ENCODE measurements at regions of chr22 and their contacts with region 1.

Region 1: DNA sequence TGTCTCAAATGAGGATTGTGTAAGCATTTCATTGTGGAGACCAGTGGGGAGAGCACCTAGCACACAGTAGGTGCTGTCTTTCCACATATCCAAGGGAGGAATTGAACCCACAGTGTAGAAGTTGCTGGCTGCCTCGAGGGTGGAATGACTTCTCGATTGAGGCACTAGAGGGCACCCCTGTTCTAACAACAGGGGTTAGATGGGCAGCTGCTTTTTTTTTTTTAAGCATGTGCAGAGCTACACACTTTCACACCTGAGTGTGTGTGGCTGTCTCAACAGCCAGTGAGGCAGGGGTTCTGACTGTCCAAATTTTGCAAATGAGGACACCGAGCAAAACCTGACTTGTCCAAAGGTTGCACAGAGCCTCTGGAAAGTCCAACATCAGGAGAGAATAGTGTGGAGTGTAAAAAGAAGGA is 118.2 kb upstream of the CRYBB3 start:
- DNase-seq: peak; percentile 63
- H3K4me3 Mint-ChIP-seq: no peak overlapping the region
- H3K27ac Mint-ChIP-seq: no peak overlapping the region
- H3K4me1 Mint-ChIP-seq: peaks cover 55% of the 10 kb centered on the region
- H3K27me3 Mint-ChIP-seq: no peaks in the 10 kb centered on the region

Region 2: DNA sequence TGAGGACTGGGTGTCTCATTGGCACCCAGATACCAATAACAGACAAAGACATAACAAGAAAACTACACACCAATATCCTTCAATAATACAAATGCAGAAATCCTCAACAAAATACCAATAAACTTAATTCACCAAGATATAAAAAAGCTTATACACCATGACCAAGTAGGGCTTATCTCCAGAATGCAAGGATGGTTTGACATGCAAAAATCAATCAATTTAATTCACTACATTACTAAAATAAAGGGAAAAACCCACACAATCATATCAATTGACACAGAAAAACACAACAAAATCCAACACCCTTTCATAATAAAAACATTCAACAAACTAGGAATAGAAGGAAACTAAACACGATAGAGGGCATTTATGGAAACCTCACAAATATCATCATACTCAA is 175.5 kb before region 1 on chr22:
- CTCF ChIA-PET with region 1: no interaction called
- POLR2A ChIA-PET with region 1: no interaction called
- DNase-seq: no peak
- H3K4me3 Mint-ChIP-seq: no peak overlapping the region
- H3K27ac Mint-ChIP-seq: no peak overlapping the region
- H3K4me1 Mint-ChIP-seq: no peaks in the 10 kb centered on the region
- H3K27me3 Mint-ChIP-seq: no peaks in the 10 kb centered on the region

Region 3: DNA sequence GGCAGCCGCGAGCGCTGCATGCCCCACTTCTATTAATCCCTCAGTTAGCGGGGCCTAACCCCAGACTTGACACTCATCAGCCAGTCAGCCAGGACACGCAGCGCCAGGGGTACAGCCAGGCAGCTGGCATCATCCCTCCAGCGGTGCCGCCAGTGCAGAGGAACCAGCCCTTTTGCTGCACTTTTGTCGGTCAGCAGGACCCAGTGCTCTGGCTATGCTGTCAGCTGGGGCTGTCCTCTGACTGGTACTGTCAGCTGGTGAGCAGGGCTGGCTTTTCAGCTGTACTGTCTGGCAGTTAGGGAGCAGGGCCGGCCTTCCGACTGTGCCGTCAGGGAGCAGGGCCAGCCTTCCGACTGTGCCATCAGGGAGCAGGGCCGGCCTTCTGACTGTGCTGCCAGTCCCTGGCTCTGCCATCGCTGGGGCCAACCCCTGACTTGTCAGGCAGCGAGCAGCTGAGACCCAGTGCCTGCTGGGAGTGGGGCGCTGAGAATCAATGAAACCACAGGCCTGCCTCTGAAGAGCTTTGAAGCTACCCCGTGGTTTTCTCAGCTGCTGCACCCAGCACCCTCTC is 13.5 kb before region 1 on chr22:
- CTCF ChIA-PET with region 1: interaction called, 11 read pairs
- POLR2A ChIA-PET with region 1: interaction called, 23 read pairs
- DNase-seq: peak; percentile 91
- H3K4me3 Mint-ChIP-seq: peak overlapping the region; percentile 79
- H3K27ac Mint-ChIP-seq: peak overlapping the region; percentile 99
- H3K4me1 Mint-ChIP-seq: peaks cover 73% of the 10 kb centered on the region
- H3K27me3 Mint-ChIP-seq: no peaks in the 10 kb centered on the region

Region 4: DNA sequence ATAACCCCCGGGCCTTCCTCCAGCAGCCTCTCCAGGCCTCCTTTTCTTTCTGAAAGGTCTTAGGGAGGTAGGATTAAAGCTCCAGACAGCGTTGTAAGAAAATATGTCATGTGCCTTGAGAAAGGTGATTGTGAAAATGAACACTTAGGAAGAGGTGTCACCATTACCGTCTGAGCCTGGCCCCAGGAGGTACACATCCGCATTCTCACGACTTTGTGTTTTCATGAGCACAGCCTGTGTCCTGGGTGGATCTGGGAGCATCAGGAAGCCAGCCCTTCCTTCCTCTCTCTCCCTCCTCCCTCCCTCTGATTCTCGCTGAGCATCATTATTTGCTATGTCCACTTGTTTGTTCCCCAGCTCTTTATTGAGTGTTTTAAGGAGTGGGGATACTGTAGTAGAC is 13.2 kb after region 1 on chr22:
- CTCF ChIA-PET with region 1: no interaction called
- POLR2A ChIA-PET with region 1: no interaction called
- DNase-seq: no peak
- H3K4me3 Mint-ChIP-seq: no peak overlapping the region
- H3K27ac Mint-ChIP-seq: no peak overlapping the region
- H3K4me1 Mint-ChIP-seq: no peaks in the 10 kb centered on the region
- H3K27me3 Mint-ChIP-seq: no peaks in the 10 kb centered on the region

Region 5: GRCh38 chr22:25237503-25237902 is 156.1 kb after region 1 on chr22:
- CTCF ChIA-PET with region 1: no interaction called
- POLR2A ChIA-PET with region 1: no interaction called
- DNase-seq: no peak
- H3K4me3 Mint-ChIP-seq: no peak overlapping the region
- H3K27ac Mint-ChIP-seq: no peak overlapping the region
- H3K4me1 Mint-ChIP-seq: peaks cover 6% of the 10 kb centered on the region
- H3K27me3 Mint-ChIP-seq: peaks cover 38% of the 10 kb centered on the region